Activated CD4-positive, alpha-beta memory T cell treated with anti-CD3 and anti-CD28 coated beads, Interleukin-2, amount 10 ng/mL, durations not matched to agents 7 days and 5 days (primary cell): ENCODE measurements at regions of chr19 and their contacts with region 1.

Region 1: GRCh38 chr19:55339048-55339888 is at the start of gene KMT5C:
- DNase-seq: peak; percentile 100
- H3K4me3 Mint-ChIP-seq: peak within 1 kb of the TSS; percentile 90
- H3K27ac Mint-ChIP-seq: peak within 1 kb of the TSS; percentile 91
- H3K4me1 Mint-ChIP-seq: peaks cover 19% of the 10 kb centered on the region
- H3K27me3 Mint-ChIP-seq: peaks cover 12% of the 10 kb centered on the region
- total RNA-seq, gene KMT5C: 27.2 to 28.9 TPM

Region 2: DNA sequence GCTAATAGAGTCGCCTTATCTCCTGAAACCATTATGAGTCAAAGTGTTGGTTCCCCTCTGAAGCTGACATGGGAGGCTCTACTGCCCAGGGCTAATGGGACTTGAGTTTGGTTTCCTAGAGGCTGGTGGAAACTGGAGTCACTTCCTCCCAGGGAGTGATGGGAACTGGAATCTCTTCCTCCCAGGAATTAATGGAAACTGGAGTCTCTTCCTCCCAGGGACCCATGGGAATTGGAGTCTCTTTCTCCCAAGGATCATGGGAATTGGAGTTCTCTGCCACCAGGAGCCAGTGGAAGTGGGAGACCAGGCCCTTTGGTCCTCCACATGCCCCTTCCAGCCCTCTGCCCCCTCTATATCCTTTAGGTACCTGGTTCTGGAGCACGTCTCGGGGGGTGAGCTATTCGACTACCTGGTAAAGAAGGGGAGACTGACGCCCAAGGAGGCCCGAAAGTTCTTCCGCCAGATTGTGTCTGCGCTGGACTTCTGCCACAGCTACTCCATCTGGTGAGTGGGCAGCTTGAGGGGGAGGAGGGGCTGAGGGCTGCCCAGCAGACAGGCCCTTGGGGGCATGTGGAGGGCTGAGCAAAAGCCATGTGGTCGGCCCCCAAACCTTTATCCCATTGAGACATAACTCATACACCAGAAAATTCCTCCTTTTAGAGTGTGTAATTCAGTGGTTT is 50.0 kb before region 1 on chr19:
- CTCF ChIA-PET with region 1: interaction called, 11 read pairs
- POLR2A ChIA-PET with region 1: interaction called, 3 read pairs
- DNase-seq: no peak
- H3K4me3 Mint-ChIP-seq: no peak overlapping the region
- H3K27ac Mint-ChIP-seq: no peak overlapping the region
- H3K4me1 Mint-ChIP-seq: peaks cover 8% of the 10 kb centered on the region
- H3K27me3 Mint-ChIP-seq: peaks cover 2% of the 10 kb centered on the region

Region 3: GRCh38 chr19:55353803-55354697 is 14.8 kb after region 1 on chr19:
- CTCF ChIA-PET with region 1: interaction called, 4 read pairs
- POLR2A ChIA-PET with region 1: interaction called, 25 read pairs
- DNase-seq: peak; percentile 71
- H3K4me3 Mint-ChIP-seq: peak overlapping the region; percentile 67
- H3K27ac Mint-ChIP-seq: no peak overlapping the region
- H3K4me1 Mint-ChIP-seq: peaks cover 34% of the 10 kb centered on the region
- H3K27me3 Mint-ChIP-seq: peaks cover 46% of the 10 kb centered on the region